ENCODE measurements at regions of chr15 and their contacts with region 1.

Region 1: DNA sequence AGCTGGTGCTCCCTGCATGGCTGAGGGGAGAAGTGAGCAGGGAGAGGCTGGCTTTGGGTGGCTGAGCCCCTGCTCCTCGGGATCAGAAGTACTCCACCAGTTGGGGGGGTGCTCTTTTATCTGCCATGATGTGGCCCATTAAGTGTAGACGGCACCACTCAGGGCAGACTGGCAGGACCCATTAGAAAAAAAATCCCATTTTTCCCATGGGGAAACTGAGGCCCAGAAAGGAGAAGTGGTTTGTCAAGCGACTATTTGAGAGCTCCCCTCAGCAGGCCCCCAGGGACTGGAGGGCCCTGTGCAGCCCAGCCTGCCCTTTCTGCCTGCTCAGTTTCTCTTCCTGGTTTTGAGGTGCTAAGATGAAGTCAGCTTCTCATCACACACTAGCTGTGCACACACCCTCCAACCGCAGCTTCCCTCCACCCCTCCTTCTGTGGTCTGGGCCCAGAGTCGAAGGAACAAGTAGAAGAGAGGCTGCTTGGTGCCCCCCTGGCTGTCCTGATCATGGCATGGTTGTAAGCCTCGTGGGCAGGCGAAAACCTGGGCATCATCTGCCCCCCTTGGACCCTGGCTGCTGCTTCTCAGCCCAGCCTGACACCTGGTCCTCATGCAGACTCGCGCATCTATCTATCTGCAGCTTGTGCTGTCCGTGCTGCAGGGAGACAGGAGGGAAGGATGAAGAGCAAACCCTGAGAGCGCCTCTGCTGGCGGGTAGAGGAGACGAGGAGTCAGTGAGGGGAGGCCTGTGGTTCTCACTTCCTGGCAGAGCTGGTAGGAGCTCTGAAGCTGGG is 5.6 kb downstream of the CSK start:
- DNase-seq: peak; percentile 97
- H3K4me3 ChIP-seq: peak overlapping the region; percentile 97
- H3K27ac ChIP-seq: peak overlapping the region; percentile 99
- H3K4me1 ChIP-seq: peaks cover 86% of the 10 kb centered on the region
- CTCF ChIP-seq: peak; percentile 91

Region 2: DNA sequence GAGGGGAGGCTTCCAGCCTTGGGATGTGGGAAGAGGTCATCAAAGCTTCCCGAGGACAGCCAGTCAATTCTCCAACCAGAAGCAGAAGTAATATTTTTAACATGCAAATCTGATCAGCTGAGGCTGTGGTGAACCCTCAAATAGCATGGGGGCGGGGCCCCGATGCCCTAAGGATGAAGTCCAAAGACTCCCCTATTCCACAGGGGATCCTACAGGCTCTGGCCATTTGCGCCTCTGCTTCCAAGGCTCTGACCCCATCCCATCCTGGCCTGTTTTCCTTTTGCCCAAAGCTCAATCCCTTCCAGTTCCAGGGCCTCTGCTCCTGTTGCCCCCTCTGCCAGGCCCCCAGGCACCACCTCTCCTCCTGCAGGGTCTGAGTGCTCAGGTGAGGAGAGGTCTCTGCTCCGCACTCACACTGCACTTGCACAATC is 12.3 kb before region 1 on chr15:
- CTCF ChIA-PET with region 1: interaction called, 40 read pairs
- POLR2A ChIA-PET with region 1: interaction called, 221 read pairs
- intact Hi-C with region 1: loop called (anchors 1 kb)
- DNase-seq: peak; percentile 66
- H3K4me3 ChIP-seq: peak overlapping the region; percentile 34
- H3K27ac ChIP-seq: peak overlapping the region; percentile 99
- H3K4me1 ChIP-seq: peaks cover 93% of the 10 kb centered on the region
- CTCF ChIP-seq: no peak

Region 3: GRCh38 chr15:74799856-74800547 is 12.6 kb after region 1 on chr15:
- CTCF ChIA-PET with region 1: interaction called, 8 read pairs
- POLR2A ChIA-PET with region 1: interaction called, 16 read pairs
- intact Hi-C with region 1: no loop called
- DNase-seq: peak; percentile 77
- H3K4me3 ChIP-seq: no peak overlapping the region
- H3K27ac ChIP-seq: peak overlapping the region; percentile 61
- H3K4me1 ChIP-seq: peaks cover 55% of the 10 kb centered on the region
- CTCF ChIP-seq: peak; percentile 88

Region 4: DNA sequence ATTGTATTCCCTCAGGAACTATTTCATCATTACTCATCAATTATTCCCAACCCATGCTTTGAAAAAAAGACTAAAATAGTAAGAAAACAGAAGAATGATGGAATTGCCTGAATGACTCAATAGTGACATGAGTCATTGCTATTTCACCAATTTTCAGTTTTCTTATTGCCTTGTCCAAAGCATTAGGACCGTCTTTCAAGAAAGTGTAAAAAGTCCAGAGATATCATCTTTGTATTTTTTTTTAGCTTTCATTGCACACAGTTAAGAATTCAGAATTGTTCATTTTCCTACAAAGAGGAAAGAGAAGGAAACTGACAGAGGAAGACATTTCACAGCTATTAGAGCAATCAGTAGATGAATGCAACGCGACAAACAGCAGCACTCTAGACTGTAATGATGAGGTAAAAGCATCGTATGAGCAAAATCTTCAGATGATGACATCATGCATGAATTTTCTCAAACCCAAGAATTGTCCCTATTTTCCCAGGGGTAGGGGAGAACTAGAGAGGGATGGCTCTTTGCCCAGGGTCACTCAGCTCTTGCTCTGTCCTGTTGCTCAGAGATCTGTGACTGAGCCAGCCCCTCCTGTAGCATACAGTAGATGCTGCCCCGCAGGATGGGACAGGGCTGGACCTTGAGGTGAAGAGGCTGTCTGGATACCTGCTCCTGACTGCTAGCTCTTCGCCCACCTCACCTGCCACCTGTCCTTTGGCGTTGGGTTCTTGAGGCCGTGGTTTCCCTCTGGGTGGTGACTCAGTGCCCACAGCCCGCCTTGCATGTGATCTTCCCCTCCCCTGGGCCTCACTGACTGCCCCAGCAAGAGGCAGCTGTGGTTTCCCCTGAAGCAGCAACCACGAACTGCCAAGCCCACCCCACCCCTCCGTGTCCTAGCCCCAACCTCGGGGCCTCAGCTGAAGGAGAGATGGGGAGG is 320.7 kb after region 1 on chr15:
- CTCF ChIA-PET with region 1: no interaction called
- POLR2A ChIA-PET with region 1: no interaction called
- intact Hi-C with region 1: no loop called
- DNase-seq: no peak
- H3K4me3 ChIP-seq: no peak overlapping the region
- H3K27ac ChIP-seq: no peak overlapping the region
- H3K4me1 ChIP-seq: peaks cover 13% of the 10 kb centered on the region
- CTCF ChIP-seq: no peak

Measured in OCI-LY7 (cell line).